MCF 10A (cell line): ENCODE measurements at regions of chr1 and their contacts with region 1.

Region 1: DNA sequence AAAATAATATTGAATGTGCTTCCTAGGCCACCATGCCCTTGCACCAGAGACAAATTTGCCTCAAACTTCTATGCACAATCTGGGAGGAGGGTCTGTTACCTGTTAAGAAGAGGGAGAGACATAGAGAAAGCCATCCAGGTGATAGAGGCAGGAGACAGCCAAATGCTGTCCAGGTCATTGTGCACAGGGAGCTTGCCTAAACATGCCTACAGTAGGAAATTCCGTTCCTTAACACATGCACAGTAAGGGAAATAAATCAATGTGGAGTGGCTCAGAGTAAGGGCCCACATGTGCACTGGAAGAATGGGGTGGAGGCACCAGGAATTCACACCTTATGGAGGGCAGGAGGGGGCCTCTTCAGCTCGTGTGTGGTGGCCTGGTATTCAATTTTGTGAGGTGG is 19.5 kb upstream of the CREG1 start:
- DNase-seq: peak; percentile 57
- H3K4me3 Mint-ChIP-seq: no peak overlapping the region
- H3K27ac Mint-ChIP-seq: peak overlapping the region; percentile 76
- H3K4me1 Mint-ChIP-seq: peaks cover 18% of the 10 kb centered on the region
- H3K27me3 Mint-ChIP-seq: no peaks in the 10 kb centered on the region
- CTCF ChIP-seq: no peak

Region 2: GRCh38 chr1:167548059-167548932 is 24.7 kb before region 1 on chr1:
- CTCF ChIA-PET with region 1: interaction called, 5 read pairs
- POLR2A ChIA-PET with region 1: interaction called, 152 read pairs
- intact Hi-C with region 1: no loop called
- DNase-seq: peak; percentile 86
- H3K4me3 Mint-ChIP-seq: peak overlapping the region; percentile 87
- H3K27ac Mint-ChIP-seq: peak overlapping the region; percentile 76
- H3K4me1 Mint-ChIP-seq: peaks cover 53% of the 10 kb centered on the region
- H3K27me3 Mint-ChIP-seq: no peaks in the 10 kb centered on the region
- CTCF ChIP-seq: no peak

Region 3: DNA sequence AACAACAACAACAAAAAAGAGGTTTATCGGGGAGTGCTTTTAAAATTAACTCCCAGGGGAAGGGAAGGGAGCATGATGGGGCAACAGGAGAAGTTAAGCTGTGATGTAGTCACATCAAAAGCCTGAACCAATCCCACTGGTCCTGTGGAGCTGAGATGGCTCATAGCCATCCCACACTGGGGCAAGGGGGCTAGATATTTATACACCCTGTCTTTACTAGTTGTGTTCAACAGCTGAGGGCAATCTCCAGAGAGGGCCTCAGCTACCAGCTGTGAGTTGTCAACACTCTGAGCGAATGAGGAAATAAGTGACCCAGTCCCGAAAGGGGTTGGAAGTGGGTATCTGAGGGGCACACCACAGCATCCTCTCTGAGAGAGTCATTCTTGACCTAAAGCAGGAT is 11.6 kb after region 1 on chr1:
- CTCF ChIA-PET with region 1: interaction called, 21 read pairs
- POLR2A ChIA-PET with region 1: interaction called, 9 read pairs
- intact Hi-C with region 1: no loop called
- DNase-seq: no peak
- H3K4me3 Mint-ChIP-seq: no peak overlapping the region
- H3K27ac Mint-ChIP-seq: no peak overlapping the region
- H3K4me1 Mint-ChIP-seq: peaks cover 7% of the 10 kb centered on the region
- H3K27me3 Mint-ChIP-seq: no peaks in the 10 kb centered on the region
- CTCF ChIP-seq: no peak